CD4-positive, alpha-beta memory T cell (primary cell): ENCODE measurements at regions of chr17 and their contacts with region 1.

Region 1: GRCh38 chr17:55750750-55751657 is at the start of gene PCTP:
- DNase-seq: peak; percentile 74 to 79 (median 78)
- H3K4me3 ChIP-seq: peak within 1 kb of the TSS; percentile 37 to 58
- H3K4me3 Mint-ChIP-seq: peak within 1 kb of the TSS; percentile 80 to 93 (median 88)
- H3K27ac ChIP-seq: peak within 1 kb of the TSS; percentile 39
- H3K27ac Mint-ChIP-seq: peak within 1 kb of the TSS; percentile 8 to 79 (median 48)
- H3K4me1 ChIP-seq: peaks cover 13% of the 10 kb centered on the region
- H3K4me1 Mint-ChIP-seq: peaks cover 15 to 26% (median 17%) of the 10 kb centered on the region in 4 donors
- H3K27me3 ChIP-seq: peaks cover 4% of the 10 kb centered on the region
- H3K27me3 Mint-ChIP-seq: peaks cover 15 to 20% of the 10 kb centered on the region in 2 donors
- total RNA-seq, gene PCTP: 2.7 to 3.3 TPM

Region 2: GRCh38 chr17:54968262-54968987 is 782.6 kb before region 1 on chr17 and contains the starts of genes COX11 and STXBP4:
- CTCF ChIA-PET with region 1: no interaction called
- POLR2A ChIA-PET with region 1: no interaction called
- intact Hi-C with region 1: loop called (anchors 10 kb)
- DNase-seq: peak; percentile 94 to 96 (median 95)
- H3K4me3 ChIP-seq: peak within 1 kb of the TSS; percentile 78 to 84
- H3K4me3 Mint-ChIP-seq: no peak within 1 kb of the TSS
- H3K27ac ChIP-seq: peak within 1 kb of the TSS; percentile 90
- H3K27ac Mint-ChIP-seq: no peak within 1 kb of the TSS
- H3K4me1 ChIP-seq: peaks cover 29% of the 10 kb centered on the region
- H3K4me1 Mint-ChIP-seq: peaks cover 8 to 23% (median 18%) of the 10 kb centered on the region in 4 donors
- H3K27me3 ChIP-seq: no peaks in the 10 kb centered on the region
- H3K27me3 Mint-ChIP-seq: no peaks in the 10 kb centered on the region
- total RNA-seq, gene COX11: 84.0 to 86.0 TPM
- total RNA-seq, gene STXBP4: 11.1 to 12.8 TPM

Region 3: DNA sequence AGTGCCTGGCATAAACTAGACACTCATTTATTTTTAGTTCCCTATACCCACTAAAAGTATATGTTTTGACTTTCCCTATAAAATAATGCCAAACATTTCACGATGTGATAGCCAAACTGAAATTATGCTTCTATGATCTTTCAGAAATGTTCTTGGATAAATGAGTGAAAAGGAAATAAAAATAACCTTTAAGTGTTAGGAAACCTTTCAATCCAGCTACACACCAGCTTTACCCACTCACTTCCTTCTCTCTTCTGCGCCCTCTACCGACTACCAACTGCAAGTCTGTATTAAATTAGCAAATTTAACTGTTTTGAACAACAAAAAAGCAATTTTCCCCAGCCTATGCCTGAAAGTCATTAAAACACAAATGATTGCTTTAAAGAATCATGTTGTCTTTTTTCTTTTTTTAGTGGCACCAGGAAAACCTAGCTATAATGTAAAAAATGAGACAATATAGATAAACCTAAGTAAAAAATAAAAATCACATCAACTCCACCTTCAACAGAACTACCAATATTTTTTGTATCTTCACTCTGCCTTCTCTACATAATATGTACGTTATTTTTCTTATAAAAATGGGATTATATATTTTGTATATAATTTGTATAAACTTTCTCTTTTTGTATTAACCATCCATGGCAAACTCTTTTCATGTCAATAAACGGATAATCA is 15.1 kb before region 1 on chr17:
- CTCF ChIA-PET with region 1: interaction called, 9 read pairs
- POLR2A ChIA-PET with region 1: no interaction called
- intact Hi-C with region 1: loop called (anchors 2 kb)
- DNase-seq: peak; percentile 17 to 38 (median 25)
- H3K4me3 ChIP-seq: no peak overlapping the region
- H3K4me3 Mint-ChIP-seq: no peak overlapping the region
- H3K27ac ChIP-seq: no peak overlapping the region
- H3K27ac Mint-ChIP-seq: peak overlapping the region in 1 of 7 donors; percentile 11
- H3K4me1 ChIP-seq: no peaks in the 10 kb centered on the region
- H3K4me1 Mint-ChIP-seq: no peaks in the 10 kb centered on the region
- H3K27me3 ChIP-seq: no peaks in the 10 kb centered on the region
- H3K27me3 Mint-ChIP-seq: peaks cover 11 to 19% of the 10 kb centered on the region in 2 donors